ENCODE measurements at regions of chr14 and their contacts with region 1.

Region 1: GRCh38 chr14:31449971-31450610 is 7.2 kb downstream of the DTD2 start:
- DNase-seq: peak; percentile 83
- ATAC-seq: peak; percentile 79
- H3K4me3 ChIP-seq: no peak overlapping the region
- H3K27ac ChIP-seq: peak overlapping the region; percentile 67
- H3K4me1 ChIP-seq: peaks cover 31% of the 10 kb centered on the region
- H3K27me3 ChIP-seq: no peaks in the 10 kb centered on the region
- CTCF ChIP-seq: peak; percentile 85

Region 2: DNA sequence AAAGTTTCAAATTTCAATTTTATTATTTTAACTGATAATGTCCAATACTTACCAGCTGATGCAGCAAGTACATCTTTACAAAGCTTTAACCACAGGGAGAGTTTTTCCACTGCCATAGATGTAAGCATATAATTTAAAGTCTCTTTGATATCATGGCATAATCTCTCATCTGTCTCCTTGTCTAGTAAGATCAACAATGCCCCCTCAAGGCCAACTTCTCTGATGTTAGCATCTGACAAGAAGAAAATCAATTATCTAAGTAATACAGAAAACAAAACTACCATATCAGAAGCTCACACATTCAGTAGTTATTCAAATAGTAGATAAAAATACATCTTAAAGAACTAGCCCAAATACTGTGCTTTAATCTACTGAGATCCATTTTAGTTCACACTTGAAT is 124.0 kb before region 1 on chr14:
- CTCF ChIA-PET with region 1: interaction called, 13 read pairs
- POLR2A ChIA-PET with region 1: no interaction called
- intact Hi-C with region 1: no loop called
- DNase-seq: peak; percentile 62
- ATAC-seq: peak; percentile 75
- H3K4me3 ChIP-seq: no peak overlapping the region
- H3K27ac ChIP-seq: no peak overlapping the region
- H3K4me1 ChIP-seq: no peaks in the 10 kb centered on the region
- H3K27me3 ChIP-seq: no peaks in the 10 kb centered on the region
- CTCF ChIP-seq: peak; percentile 65

Region 3: DNA sequence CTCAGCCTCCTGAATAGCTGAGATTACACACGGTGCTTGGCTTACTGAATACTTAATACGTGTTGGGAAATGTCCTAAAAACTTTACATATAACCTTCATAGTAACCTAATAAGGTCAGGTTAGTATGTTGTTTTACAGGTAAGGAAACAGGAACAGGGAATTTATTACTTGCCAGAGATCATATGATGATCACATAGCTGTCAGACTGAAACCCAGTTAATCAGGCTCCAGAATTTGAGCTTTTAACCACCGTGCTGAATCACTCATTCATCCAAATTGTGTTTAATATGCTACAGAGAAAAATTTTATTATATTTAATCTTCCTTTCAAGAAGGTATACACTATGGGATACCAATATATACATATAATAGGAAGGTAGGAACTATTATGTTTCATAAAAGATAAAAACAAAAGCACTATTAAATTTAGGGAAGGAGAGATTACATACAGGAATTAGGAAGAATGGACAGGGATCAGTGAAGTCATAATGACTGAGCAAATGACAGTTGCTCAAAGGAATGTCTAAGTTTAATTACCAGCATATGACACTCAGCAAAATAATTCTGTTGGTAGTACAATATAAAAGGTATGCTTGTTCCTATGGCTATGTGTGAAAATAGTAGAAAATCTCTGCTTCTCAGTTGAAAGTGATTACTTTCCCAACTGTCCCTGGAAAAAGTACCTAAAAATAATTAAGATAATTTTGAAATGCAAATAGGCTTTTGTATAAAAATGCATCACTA is 89.0 kb before region 1 on chr14:
- CTCF ChIA-PET with region 1: no interaction called
- POLR2A ChIA-PET with region 1: no interaction called
- intact Hi-C with region 1: loop called (anchors 1 kb)
- DNase-seq: peak; percentile 75
- ATAC-seq: peak; percentile 82
- H3K4me3 ChIP-seq: no peak overlapping the region
- H3K27ac ChIP-seq: peak overlapping the region; percentile 15
- H3K4me1 ChIP-seq: peaks cover 29% of the 10 kb centered on the region
- H3K27me3 ChIP-seq: no peaks in the 10 kb centered on the region
- CTCF ChIP-seq: no peak

Region 4: DNA sequence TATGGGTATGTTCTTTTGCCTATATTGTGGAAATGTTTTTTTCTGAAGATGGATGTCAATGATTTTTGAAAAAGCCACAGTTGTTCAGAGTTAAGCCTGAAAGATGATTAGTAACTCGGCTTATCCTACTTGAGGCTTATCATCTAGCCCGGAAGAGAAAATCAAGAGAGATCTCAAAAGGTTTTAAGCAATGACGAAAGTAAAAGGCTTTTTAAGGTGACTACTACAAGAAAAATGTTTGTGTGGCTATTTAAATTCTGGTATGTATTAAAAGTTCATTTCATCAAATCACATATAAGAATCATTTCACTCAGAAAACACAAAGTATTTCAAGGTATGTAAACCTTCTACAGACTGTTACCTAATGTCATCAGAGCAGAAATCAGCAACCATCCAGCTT is 70.0 kb before region 1 on chr14:
- CTCF ChIA-PET with region 1: interaction called, 7 read pairs
- POLR2A ChIA-PET with region 1: no interaction called
- intact Hi-C with region 1: loop called (anchors 5 kb)
- DNase-seq: no peak
- ATAC-seq: no peak
- H3K4me3 ChIP-seq: no peak overlapping the region
- H3K27ac ChIP-seq: no peak overlapping the region
- H3K4me1 ChIP-seq: peaks cover 12% of the 10 kb centered on the region
- H3K27me3 ChIP-seq: no peaks in the 10 kb centered on the region
- CTCF ChIP-seq: no peak

Region 5: GRCh38 chr14:31414190-31414833 is 35.8 kb before region 1 on chr14:
- CTCF ChIA-PET with region 1: interaction called, 29 read pairs
- POLR2A ChIA-PET with region 1: interaction called, 29 read pairs
- intact Hi-C with region 1: loop called (anchors 1 kb)
- DNase-seq: peak; percentile 72
- ATAC-seq: peak; percentile 92
- H3K4me3 ChIP-seq: no peak overlapping the region
- H3K27ac ChIP-seq: peak overlapping the region; percentile 4
- H3K4me1 ChIP-seq: peaks cover 25% of the 10 kb centered on the region
- H3K27me3 ChIP-seq: no peaks in the 10 kb centered on the region
- CTCF ChIP-seq: no peak

Region 6: GRCh38 chr14:31420319-31421111 is 29.6 kb before region 1 on chr14 and contains the start of gene HEATR5A:
- CTCF ChIA-PET with region 1: interaction called, 29 read pairs
- POLR2A ChIA-PET with region 1: interaction called, 29 read pairs
- intact Hi-C with region 1: loop called (anchors 1 kb)
- DNase-seq: peak; percentile 97
- ATAC-seq: peak; percentile 92
- H3K4me3 ChIP-seq: peak within 1 kb of the TSS; percentile 91
- H3K27ac ChIP-seq: peak within 1 kb of the TSS; percentile 39
- H3K4me1 ChIP-seq: peaks cover 13% of the 10 kb centered on the region
- H3K27me3 ChIP-seq: no peaks in the 10 kb centered on the region
- CTCF ChIP-seq: 0 out of 2 replicates have a peak, but pooled peaks have one; percentile 21
- total RNA-seq, gene HEATR5A: 11.5 and 12.7 TPM in 2 replicates